Dorsolateral prefrontal cortex (tissue), 120 donors: ENCODE measurements at regions of chr13 and their contacts with region 1.

Region 1: DNA sequence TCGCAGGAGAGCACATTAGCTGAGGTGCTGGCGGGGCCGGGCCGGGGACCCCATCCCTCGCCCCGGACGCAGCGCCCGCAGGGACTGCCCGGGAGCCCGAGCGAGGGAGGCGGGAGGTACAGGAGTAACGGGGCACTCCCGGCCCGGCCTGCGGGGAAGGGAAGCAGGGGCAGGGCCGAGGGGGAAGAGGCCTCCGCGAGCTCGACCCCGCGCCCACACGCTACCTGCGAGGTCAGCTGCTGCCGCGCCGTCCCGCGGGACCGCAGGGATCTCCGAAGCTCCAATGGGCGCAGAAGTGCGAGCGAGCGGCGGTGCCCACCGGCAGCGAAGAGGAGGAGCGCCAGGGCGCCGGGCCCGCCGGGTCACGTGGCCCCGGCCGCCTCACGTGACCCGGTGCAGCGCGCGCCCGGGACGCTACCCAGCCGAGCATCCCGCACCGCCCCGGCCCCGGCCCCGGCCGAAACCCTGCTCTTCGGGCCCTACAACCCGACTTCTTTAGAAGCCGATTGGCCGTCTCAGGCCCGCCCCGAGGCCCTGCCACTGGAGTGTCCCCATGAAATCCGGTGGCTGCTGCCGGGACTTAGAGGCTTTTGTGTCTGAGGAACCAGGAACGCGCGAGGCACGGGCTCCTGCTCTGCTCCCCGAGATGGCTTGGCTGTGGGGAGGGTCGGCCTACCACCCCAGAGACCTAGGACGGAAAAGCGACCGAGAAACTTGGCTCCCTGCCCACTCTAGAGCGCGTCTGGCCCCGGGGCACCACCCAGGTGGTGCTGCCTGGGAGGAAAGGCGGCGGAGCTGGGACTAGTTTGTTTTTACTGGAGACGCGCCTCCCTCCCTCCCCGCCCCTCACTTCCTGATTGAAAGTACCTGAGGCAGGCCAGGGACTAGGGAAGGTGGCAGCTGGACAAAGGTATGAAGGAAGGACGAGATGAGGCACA is at the start of gene RCBTB1:
- DNase-seq: peak; percentile 43 to 73 (median 57)
- H3K4me3 ChIP-seq: peak within 1 kb of the TSS; percentile 66 to 100 (median 95)
- H3K27ac ChIP-seq: peak within 1 kb of the TSS; percentile 68 to 98 (median 91)
- H3K27me3 ChIP-seq: no peaks in the 10 kb centered on the region
- CTCF ChIP-seq: peak in 19 of 56 donors; percentile 5 to 42 (median 25)
- total RNA-seq, gene RCBTB1: 22.3 to 65.9 (median 35.9) TPM

Region 2: DNA sequence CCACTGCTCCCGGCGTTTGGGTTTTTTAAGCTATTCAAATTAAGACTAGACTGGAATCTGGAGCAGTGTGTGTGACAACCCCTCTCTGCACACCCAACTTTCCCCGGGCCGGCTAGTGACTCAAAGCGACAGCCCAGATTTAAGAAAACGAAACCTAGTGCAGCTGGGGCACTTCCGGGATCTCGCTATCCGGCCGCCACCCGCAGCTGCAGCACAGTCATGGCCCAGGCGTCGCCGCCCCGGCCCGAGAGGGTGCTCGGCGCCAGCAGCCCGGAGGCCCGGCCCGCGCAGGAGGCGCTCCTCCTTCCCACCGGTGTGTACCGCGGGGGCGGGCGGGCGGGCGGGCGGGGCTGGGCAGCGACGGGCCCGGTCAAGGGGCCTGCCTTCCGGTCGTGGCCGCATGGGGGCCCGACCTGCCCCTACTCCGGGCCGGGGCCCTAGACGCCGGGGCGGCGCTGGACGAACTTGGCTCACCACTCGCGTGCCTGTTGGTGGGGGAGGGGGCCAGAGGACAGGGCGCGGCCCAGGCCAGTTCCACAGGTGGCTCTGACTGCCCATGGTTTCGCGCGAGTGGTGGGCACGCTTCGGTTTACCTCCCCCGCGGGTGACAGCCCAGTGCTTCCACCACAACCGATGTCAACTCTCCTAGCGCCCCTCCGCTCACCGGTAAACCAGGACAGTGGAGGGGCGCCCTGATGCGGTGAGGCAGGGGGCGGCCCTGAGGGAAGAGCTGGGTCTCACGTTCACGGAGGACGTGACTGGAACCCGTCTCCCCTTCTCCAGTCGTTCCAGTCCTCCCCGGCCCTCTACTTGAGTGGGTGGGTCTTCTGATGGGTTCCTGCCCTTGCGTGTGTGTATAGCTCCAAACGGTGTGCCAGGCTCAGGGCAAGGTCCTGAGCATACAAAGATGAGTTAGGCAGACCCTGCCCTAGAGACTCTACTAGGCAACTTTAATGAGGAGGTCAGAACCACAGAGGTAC is 89.4 kb before region 1 on chr13 and contains the start of gene PHF11:
- intact Hi-C with region 1: loop called in 1 of 2 experiments (anchors 10 kb)
- DNase-seq: peak; percentile 34 to 78 (median 64)
- H3K4me3 ChIP-seq: peak within 1 kb of the TSS; percentile 58 to 88 (median 75)
- H3K27ac ChIP-seq: peak within 1 kb of the TSS; percentile 58 to 96 (median 92)
- H3K27me3 ChIP-seq: no peaks in the 10 kb centered on the region
- CTCF ChIP-seq: peak in 19 of 56 donors; percentile 4 to 42 (median 26)
- total RNA-seq, gene PHF11: 20.4 to 55.8 (median 32.2) TPM

Region 3: GRCh38 chr13:49527123-49527522 is 58.4 kb before region 1 on chr13:
- intact Hi-C with region 1: no loop called
- DNase-seq: peak in 6 of 10 donors; percentile 11 to 57 (median 42)
- H3K4me3 ChIP-seq: no peak overlapping the region
- H3K27ac ChIP-seq: peak overlapping the region in 21 of 59 donors; percentile 1 to 67 (median 33)
- H3K27me3 ChIP-seq: no peaks in the 10 kb centered on the region
- CTCF ChIP-seq: peak in 1 of 56 donors; percentile 20

Region 4: GRCh38 chr13:49606747-49607648 is 21.5 kb after region 1 on chr13:
- intact Hi-C with region 1: loop called in 1 of 2 experiments (anchors 2 kb)
- DNase-seq: peak; percentile 79 to 96 (median 91)
- H3K4me3 ChIP-seq: peak overlapping the region in 58 of 59 donors; percentile 15 to 66 (median 48)
- H3K27ac ChIP-seq: peak overlapping the region in 29 of 59 donors; percentile 4 to 80 (median 46)
- H3K27me3 ChIP-seq: no peaks in the 10 kb centered on the region
- CTCF ChIP-seq: peak; percentile 65 to 96 (median 86)